ENCODE measurements at regions of chr20 and their contacts with region 1.

Region 1: GRCh38 chr20:63253438-63254236 is 626 bp downstream of the NKAIN4 start:
- DNase-seq: no peak
- ATAC-seq: peak; percentile 69
- H3K4me3 ChIP-seq: no peak overlapping the region; the same call in 1 of the 2 replicates
- H3K27ac ChIP-seq: no peak overlapping the region
- H3K4me1 ChIP-seq: no peaks in the 10 kb centered on the region
- H3K27me3 ChIP-seq: peaks cover 73% of the 10 kb centered on the region
- CTCF ChIP-seq: no peak
- POLR2A ChIP-seq: no peak
- RAD21 ChIP-seq: no peak

Region 2: DNA sequence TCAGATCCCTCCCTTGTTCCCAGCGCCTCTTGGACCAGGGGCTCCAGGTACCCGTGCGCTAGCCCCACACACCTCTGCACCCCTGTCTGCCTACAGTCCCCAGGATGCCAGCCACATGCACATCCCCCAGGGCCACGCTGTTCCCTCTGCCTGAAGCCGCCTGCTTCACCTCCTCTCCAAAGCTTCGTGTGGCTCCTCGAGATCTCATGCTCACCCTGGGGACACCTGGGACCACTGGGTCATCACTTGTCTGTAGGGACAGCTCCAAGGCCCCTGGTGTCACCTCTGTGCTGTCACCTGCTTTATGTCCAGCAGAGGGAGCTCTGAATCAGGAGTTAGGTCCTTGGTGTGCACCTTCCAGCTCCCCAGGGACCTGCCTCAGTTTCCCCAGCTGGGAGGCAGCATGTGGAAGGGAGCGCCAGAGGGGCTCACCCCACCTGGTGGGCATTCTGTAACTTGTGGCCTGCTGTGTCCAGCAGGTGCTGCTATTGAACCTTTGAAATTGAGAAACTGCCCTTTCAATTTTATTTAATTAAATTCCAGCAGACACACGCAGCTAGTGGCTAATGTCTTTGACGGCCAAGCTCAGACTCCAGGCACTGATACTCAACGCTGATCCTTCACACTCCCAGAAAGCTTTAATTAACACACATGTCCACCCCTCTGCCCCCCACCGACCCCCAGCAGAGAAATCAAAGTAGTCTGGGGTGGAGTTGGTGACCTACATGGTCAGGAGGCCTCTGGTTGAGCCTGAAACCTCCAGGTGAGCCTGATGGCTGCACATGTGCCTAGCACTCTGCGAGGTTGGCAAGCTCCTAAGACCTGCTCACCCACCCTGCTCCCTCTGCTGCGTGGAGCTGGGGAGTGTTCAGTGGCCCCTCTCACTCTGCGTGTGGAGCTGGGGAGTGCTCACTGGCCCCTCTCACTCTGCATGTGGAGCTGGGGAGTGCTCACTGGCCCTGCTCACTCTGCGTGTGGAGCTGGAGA is 30.1 kb before region 1 on chr20:
- CTCF ChIA-PET with region 1: interaction called, 13 read pairs
- POLR2A ChIA-PET with region 1: no interaction called
- dilution Hi-C with region 1: no loop called
- in situ Hi-C with region 1: no loop called
- intact Hi-C with region 1: loop called (anchors 1 kb)
- DNase-seq: peak; percentile 30
- ATAC-seq: peak; percentile 74
- H3K4me3 ChIP-seq: no peak overlapping the region
- H3K27ac ChIP-seq: no peak overlapping the region
- H3K4me1 ChIP-seq: peaks cover 10% of the 10 kb centered on the region
- H3K27me3 ChIP-seq: peaks cover 28% of the 10 kb centered on the region
- CTCF ChIP-seq: peak; percentile 65
- POLR2A ChIP-seq: 0 out of 2 replicates have a peak, but pooled peaks have one; percentile 20
- RAD21 ChIP-seq: peak; percentile 74

Measured in IMR-90 (cell line).